Activated CD4-positive, alpha-beta T cell treated with anti-CD3 and anti-CD28 coated beads, Interleukin-2, amount 10 ng/mL, durations not matched to agents 24 days and 14 days (primary cell): ENCODE measurements at regions of chr12 and their contacts with region 1.

Region 1: DNA sequence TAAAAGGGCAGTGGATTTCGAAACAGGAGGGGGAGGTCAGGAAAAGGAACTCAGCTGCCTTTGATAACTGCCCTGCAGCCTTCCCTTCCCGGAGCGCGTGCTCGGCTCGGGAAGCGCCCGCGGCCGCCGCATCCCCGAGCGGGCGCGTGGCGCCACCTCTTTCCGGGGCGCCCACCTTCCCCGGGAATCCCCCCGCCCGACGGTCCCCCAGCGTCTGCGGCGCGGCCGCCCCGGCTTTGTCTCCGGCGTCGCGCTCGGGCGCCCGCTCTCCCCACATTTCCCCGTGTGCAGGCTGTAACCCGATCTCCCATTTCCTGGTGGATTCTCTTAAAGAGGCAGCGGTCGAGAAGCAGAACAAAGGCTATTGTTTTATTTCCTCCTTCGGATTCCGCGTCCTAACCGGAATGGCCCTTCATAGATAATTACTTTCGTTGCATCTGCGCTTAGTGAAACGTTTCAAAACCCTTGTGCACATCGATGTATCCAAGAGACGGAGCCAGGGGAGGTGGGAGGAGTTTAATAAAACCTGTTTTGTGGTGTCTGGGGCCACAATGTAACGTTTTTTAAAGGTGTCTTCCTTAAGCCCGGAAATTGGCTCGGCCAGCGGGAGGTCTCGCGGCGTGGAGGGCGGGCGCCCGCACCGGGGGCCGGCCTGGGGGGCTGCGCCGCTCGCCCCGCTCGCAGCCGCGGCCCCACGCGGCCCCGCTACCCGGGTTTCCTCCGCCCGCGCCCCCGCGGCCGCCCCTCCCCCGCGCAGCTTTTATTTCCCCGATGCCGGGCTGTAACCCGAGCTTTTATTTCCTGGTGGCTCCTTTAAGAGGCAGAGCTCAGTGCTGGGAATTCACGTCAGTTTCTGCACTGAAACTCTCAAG is at the start of gene ETV6:
- DNase-seq: peak; percentile 94
- H3K4me3 Mint-ChIP-seq: peak within 1 kb of the TSS; percentile 91
- H3K27ac Mint-ChIP-seq: peak within 1 kb of the TSS; percentile 97
- H3K4me1 Mint-ChIP-seq: peaks cover 25% of the 10 kb centered on the region
- H3K27me3 Mint-ChIP-seq: no peaks in the 10 kb centered on the region
- total RNA-seq, gene ETV6: 114 and 119 TPM in 2 replicates

Region 2: GRCh38 chr12:11581179-11581755 is 67.8 kb before region 1 on chr12:
- intact Hi-C with region 1: loop called (anchors 1 kb)
- DNase-seq: peak; percentile 90
- H3K4me3 Mint-ChIP-seq: no peak overlapping the region
- H3K27ac Mint-ChIP-seq: no peak overlapping the region
- H3K4me1 Mint-ChIP-seq: peaks cover 26% of the 10 kb centered on the region
- H3K27me3 Mint-ChIP-seq: peaks cover 8% of the 10 kb centered on the region

Region 3: GRCh38 chr12:11621797-11622423 is 27.2 kb before region 1 on chr12:
- intact Hi-C with region 1: no loop called
- DNase-seq: peak; percentile 66
- H3K4me3 Mint-ChIP-seq: no peak overlapping the region
- H3K27ac Mint-ChIP-seq: no peak overlapping the region
- H3K4me1 Mint-ChIP-seq: peaks cover 15% of the 10 kb centered on the region
- H3K27me3 Mint-ChIP-seq: no peaks in the 10 kb centered on the region

Region 4: DNA sequence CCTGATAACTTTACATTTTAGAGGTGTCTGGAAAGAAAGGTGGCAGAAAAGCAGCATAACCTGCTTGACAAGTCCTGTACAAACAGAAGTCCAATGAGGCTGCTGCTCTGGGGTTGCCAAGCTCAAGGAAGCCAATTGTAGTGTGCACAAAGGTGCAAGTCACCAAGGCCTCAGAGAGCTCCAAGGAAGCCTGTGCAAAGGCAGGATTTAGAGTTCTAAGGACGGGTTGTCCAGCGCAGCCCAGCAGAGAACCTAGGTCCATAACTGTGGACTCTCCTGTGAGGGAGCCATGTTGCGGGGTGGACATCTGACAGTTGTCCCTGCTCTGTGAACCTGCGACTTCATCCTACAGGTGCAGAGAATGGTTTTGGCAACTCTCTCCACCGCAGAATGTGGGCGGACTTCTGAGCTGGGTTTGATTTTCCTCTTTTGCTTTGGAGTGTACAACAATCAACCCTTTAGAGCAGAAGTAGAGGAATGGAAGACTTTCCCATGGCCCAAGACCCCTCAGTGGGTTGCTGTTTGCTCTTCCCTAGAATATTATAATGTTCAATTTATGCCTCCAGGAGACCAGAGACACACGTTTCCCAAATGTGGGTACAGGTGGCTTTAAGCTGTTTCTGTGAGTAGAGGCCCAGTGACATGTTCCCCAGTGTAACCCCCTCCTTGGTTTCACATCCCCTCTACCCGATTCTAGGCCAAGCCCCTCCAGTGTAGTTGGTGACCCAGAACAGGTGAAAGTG is 81.4 kb after region 1 on chr12:
- intact Hi-C with region 1: loop called (anchors 1 kb)
- DNase-seq: peak; percentile 69
- H3K4me3 Mint-ChIP-seq: peak overlapping the region; percentile 83
- H3K27ac Mint-ChIP-seq: peak overlapping the region; percentile 95
- H3K4me1 Mint-ChIP-seq: peaks cover 80% of the 10 kb centered on the region
- H3K27me3 Mint-ChIP-seq: no peaks in the 10 kb centered on the region

Region 5: DNA sequence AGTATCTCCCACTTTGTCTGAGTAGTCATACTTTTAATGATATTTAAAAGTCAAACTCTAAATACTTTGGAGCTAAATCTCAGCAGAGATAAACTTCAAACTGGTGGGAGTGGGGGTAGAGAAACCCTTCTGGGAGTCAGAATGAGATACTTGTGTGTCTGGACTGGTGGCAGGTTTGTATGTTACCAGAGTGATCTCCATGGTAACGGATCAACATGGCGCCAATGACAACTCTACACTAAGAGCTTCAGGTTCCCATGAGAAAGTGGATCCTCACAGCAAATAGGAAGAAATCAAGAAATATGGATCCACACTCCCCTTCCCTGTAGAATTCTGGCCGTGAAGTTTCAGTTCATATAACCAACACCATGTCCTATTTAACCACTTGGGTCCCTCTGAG is 122.3 kb after region 1 on chr12:
- intact Hi-C with region 1: loop called (anchors 1 kb)
- DNase-seq: peak; percentile 65
- H3K4me3 Mint-ChIP-seq: peak overlapping the region; percentile 26
- H3K27ac Mint-ChIP-seq: peak overlapping the region; percentile 97
- H3K4me1 Mint-ChIP-seq: peaks cover 78% of the 10 kb centered on the region
- H3K27me3 Mint-ChIP-seq: no peaks in the 10 kb centered on the region

Region 6: DNA sequence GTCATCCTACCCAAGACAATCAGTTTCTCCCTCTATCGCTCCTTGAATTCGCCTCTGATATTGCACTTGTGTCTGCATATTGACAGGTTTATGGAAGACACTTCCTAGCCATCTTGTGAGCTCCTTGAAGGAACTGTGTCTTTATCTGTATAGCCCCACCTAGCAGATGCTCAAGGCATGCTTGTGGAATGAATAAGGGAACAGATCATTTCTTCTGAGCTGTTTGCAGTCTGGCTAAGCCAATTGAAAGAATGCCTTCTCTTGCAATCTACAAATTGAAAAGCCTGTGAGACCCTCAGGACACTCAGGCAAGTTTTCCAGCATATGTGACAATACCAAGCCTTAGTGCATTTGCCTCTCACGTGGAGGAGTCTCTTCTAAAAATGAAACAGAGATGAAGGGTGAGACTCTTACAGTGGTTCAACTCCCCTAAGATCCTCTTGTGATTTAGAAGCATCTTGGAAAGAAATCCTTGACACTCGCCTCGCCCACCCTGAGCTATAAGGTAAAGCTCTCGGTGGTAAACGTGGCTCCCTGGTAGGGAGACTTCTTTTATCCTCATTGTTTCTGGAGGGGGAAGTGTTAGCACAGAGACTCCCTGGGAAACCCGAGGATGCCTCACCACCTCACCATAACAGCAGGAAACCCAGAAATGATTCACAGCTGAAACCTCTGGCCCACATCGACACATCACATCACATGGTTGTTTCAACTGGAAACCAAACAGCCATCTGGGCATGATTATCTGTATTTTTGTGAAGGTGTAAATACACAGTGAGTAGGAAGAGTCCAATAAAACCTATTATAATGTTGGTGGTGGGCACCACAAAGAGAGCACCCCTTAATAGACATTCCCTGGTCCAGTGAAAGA is 309.4 kb after region 1 on chr12:
- intact Hi-C with region 1: loop called (anchors 2 kb)
- DNase-seq: peak; percentile 85
- H3K4me3 Mint-ChIP-seq: peak overlapping the region; percentile 27
- H3K27ac Mint-ChIP-seq: peak overlapping the region; percentile 91
- H3K4me1 Mint-ChIP-seq: peaks cover 57% of the 10 kb centered on the region
- H3K27me3 Mint-ChIP-seq: no peaks in the 10 kb centered on the region

Region 7: DNA sequence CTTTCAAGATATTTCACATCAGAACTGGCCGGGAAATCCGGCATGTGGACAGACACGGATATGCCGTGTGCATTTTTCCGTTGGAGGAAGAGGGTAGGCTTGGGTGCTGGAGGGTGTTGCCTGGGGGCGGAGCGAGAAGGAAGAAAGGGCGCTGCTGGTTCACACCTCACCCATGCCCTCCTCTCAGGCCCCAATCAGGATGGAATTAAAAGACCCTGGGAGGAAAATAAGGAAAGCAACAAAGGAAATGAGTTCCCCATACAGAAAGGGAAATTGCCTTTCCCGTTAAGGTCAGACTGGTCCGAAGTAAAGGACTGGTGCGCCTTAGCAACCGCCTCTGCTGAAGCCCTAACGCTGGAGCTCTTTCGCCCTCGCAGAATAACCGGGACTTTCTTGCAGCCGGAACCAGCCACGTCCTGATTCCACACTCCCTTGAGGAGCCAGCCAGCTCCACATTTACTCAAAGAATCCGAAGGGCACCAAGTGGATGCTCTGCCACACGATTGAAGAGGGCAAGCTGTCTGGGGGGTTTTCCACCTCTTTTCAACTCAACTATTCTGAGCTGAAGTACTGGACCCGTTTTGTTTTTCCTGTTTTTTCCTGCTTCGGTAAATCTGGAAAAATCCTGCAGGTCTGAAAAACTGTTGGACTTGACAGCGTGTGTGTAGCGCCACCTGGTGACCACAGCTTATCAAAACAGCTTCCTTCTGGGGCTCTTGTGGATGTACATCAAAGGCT is 384.0 kb after region 1 on chr12:
- intact Hi-C with region 1: loop called (anchors 2 kb)
- DNase-seq: peak; percentile 90
- H3K4me3 Mint-ChIP-seq: peak overlapping the region; percentile 81
- H3K27ac Mint-ChIP-seq: peak overlapping the region; percentile 93
- H3K4me1 Mint-ChIP-seq: peaks cover 59% of the 10 kb centered on the region
- H3K27me3 Mint-ChIP-seq: no peaks in the 10 kb centered on the region

Region 8: DNA sequence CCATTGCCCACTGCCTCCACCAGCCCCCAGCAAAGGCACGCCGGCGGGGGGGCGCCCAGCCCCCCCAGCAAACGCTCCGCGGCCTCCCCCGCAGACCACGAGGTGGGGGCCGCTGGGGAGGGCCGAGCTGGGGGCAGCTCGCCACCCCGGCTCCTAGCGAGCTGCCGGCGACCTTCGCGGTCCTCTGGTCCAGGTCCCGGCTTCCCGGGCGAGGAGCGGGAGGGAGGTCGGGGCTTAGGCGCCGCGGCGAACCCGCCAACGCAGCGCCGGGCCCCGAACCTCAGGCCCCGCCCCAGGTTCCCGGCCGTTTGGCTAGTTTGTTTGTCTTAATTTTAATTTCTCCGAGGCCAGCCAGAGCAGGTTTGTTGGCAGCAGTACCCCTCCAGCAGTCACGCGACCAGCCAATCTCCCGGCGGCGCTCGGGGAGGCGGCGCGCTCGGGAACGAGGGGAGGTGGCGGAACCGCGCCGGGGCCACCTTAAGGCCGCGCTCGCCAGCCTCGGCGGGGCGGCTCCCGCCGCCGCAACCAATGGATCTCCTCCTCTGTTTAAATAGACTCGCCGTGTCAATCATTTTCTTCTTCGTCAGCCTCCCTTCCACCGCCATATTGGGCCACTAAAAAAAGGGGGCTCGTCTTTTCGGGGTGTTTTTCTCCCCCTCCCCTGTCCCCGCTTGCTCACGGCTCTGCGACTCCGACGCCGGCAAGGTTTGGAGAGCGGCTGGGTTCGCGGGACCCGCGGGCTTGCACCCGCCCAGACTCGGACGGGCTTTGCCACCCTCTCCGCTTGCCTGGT is 1067.9 kb after region 1 on chr12 and contains the start of gene CDKN1B:
- intact Hi-C with region 1: loop called (anchors 5 kb)
- DNase-seq: peak; percentile 94
- H3K4me3 Mint-ChIP-seq: peak within 1 kb of the TSS; percentile 97
- H3K27ac Mint-ChIP-seq: peak within 1 kb of the TSS; percentile 99
- H3K4me1 Mint-ChIP-seq: peaks cover 57% of the 10 kb centered on the region
- H3K27me3 Mint-ChIP-seq: no peaks in the 10 kb centered on the region
- total RNA-seq, gene CDKN1B: 47.4 and 48.5 TPM in 2 replicates